ENCODE measurements at regions of chr5 and their contacts with region 1.

Region 1: GRCh38 chr5:140162781-140163180 is 12.2 kb upstream of the CYSTM1 start:
- DNase-seq: no peak
- ATAC-seq: no peak
- H3K4me3 ChIP-seq: no peak overlapping the region
- H3K27ac ChIP-seq: no peak overlapping the region
- H3K4me1 ChIP-seq: no peaks in the 10 kb centered on the region
- H3K27me3 ChIP-seq: no peaks in the 10 kb centered on the region
- CTCF ChIP-seq: no peak

Region 2: GRCh38 chr5:140145818-140146522 is 16.8 kb before region 1 on chr5:
- CTCF ChIA-PET with region 1: no interaction called
- POLR2A ChIA-PET with region 1: no interaction called
- in situ Hi-C with region 1: no loop called
- intact Hi-C with region 1: no loop called
- DNase-seq: no peak
- ATAC-seq: peak; percentile 78
- H3K4me3 ChIP-seq: peak overlapping the region; percentile 6 to 8; a peak in 2 of 4 replicates
- H3K27ac ChIP-seq: no peak overlapping the region
- H3K4me1 ChIP-seq: peaks cover 5% of the 10 kb centered on the region; the same call in 1 of the 2 replicates
- H3K27me3 ChIP-seq: no peaks in the 10 kb centered on the region
- CTCF ChIP-seq: peak; percentile 80; the same call in 1 of the 2 replicates

Region 3: GRCh38 chr5:140189977-140190871 is 27.4 kb after region 1 on chr5:
- CTCF ChIA-PET with region 1: no interaction called
- POLR2A ChIA-PET with region 1: interaction called, 11 read pairs
- in situ Hi-C with region 1: no loop called
- intact Hi-C with region 1: no loop called
- DNase-seq: peak; percentile 89
- ATAC-seq: peak; percentile 71
- H3K4me3 ChIP-seq: no peak overlapping the region
- H3K27ac ChIP-seq: peak overlapping the region; percentile 79; the same call in 1 of the 2 replicates
- H3K4me1 ChIP-seq: peaks cover 57% of the 10 kb centered on the region
- H3K27me3 ChIP-seq: no peaks in the 10 kb centered on the region
- CTCF ChIP-seq: no peak

Measured in Panc1 (cell line).